Sigmoid colon (tissue), 7 donors: ENCODE measurements at regions of chr4 and their contacts with region 1.

Region 1: DNA sequence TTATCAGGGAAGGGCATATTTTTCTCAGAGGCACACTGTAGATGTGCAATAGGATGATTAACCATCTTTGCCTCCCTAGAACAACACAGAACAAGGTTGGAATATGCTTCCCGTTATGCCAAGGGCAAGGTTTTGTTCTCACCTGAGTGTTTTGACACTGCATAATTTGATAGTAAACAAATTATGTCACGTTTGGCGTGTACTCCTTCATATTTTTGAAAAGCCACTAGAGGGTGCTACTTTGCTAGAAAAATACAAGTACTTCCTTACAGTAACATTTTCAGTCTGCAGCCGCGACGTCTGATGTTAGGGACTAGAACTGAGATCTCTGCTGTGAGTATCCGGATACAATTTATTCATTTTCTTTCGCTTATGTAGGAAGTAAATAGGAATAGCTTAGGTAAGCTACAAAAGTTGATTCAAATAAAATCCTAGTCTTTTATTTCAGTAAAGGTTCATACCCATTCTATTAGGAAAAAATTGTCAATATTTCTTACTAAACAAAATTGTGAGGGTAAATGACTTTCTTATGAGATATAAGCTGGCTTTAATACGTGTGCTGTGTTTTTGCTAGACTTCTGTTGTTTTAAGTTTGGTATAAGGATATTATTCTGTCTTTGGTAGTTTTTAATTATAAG is 181.1 kb upstream of the WDFY3 start:
- DNase-seq: peak; percentile 80
- H3K4me3 ChIP-seq: peak overlapping the region in 2 of 4 donors; percentile 3 to 7
- H3K27ac ChIP-seq: no peak overlapping the region
- H3K4me1 ChIP-seq: peaks cover 0 to 6% (median 0%) of the 10 kb centered on the region in 4 donors
- H3K27me3 ChIP-seq: no peaks in the 10 kb centered on the region
- CTCF ChIP-seq: peak in 3 of 4 experiments; percentile 30 to 56 (median 53)
- EP300 ChIP-seq: no peak
- POLR2A ChIP-seq: no peak

Region 2: GRCh38 chr4:84907145-84907544 is 240.4 kb before region 1 on chr4:
- intact Hi-C with region 1: no loop called
- DNase-seq: no peak
- H3K4me3 ChIP-seq: no peak overlapping the region
- H3K27ac ChIP-seq: no peak overlapping the region
- H3K4me1 ChIP-seq: peaks cover 0 to 8% (median 6%) of the 10 kb centered on the region in 4 donors
- H3K27me3 ChIP-seq: no peaks in the 10 kb centered on the region
- CTCF ChIP-seq: no peak
- EP300 ChIP-seq: no peak
- POLR2A ChIP-seq: no peak

Region 3: GRCh38 chr4:85747882-85748491 is 600.4 kb after region 1 on chr4:
- intact Hi-C with region 1: loop called (anchors 2 kb)
- DNase-seq: no peak
- H3K4me3 ChIP-seq: no peak overlapping the region
- H3K27ac ChIP-seq: no peak overlapping the region
- H3K4me1 ChIP-seq: no peaks in the 10 kb centered on the region
- H3K27me3 ChIP-seq: no peaks in the 10 kb centered on the region
- CTCF ChIP-seq: peak; percentile 10 to 82 (median 64)
- EP300 ChIP-seq: no peak
- POLR2A ChIP-seq: no peak

Region 4: GRCh38 chr4:85968945-85969819 is 821.6 kb after region 1 on chr4:
- intact Hi-C with region 1: loop called (anchors 5 kb)
- DNase-seq: no peak
- H3K4me3 ChIP-seq: no peak overlapping the region
- H3K27ac ChIP-seq: no peak overlapping the region
- H3K4me1 ChIP-seq: peaks cover 0 to 23% (median 17%) of the 10 kb centered on the region in 4 donors
- H3K27me3 ChIP-seq: no peaks in the 10 kb centered on the region
- CTCF ChIP-seq: peak in 3 of 4 experiments; percentile 48 to 52 (median 49)
- EP300 ChIP-seq: no peak
- POLR2A ChIP-seq: no peak

Region 5: DNA sequence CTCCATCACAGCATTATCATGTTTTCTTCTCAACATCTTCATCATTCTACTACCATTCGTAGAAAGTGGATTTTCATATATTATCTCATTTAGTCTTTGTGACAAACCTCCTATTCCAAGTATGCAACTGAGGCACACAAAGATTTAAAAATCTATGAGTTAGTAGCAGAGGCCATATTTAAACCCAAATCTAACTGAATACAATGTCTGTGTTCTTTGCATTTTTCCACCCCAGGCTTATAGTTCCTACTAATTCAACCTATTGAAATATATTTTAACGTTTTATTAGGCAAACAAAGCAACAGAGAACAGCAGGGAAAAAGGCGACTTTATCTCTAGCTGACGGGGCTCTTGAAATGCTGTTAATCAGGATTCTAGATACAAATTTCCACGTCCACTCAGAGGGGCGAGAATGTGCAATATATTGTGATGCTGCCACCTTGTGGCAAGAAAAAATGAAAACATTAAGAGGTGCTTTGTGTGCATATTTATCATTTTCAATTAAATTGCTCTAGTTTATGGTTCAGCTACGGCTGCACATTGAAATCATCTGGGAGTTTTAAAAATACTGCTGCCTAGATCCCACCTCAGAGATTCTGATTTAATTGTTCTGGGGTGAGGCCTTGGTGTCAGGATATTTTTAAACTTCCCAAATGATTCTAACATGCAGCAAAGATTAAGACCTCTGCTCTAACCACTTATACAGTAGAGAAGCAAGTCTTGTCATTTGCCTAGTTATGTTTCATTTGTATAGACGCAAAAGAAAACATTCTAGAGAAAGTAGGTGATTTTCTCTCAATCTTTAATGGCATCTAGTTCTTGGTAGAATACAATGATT is 896.4 kb after region 1 on chr4:
- intact Hi-C with region 1: loop called (anchors 5 kb)
- DNase-seq: no peak
- H3K4me3 ChIP-seq: no peak overlapping the region
- H3K27ac ChIP-seq: no peak overlapping the region
- H3K4me1 ChIP-seq: peaks cover 0 to 4% (median 0%) of the 10 kb centered on the region in 4 donors
- H3K27me3 ChIP-seq: no peaks in the 10 kb centered on the region
- CTCF ChIP-seq: peak in 3 of 4 experiments; percentile 23 to 58 (median 36)
- EP300 ChIP-seq: no peak
- POLR2A ChIP-seq: no peak